Activated naive CD4-positive, alpha-beta T cell treated with anti-CD3 and anti-CD28 coated beads for 36 hours (primary cell): ENCODE measurements at regions of chr9 and their contacts with region 1.

Region 1: GRCh38 chr9:83937911-83938323 is 16.7 kb upstream of the KIF27 start:
- DNase-seq: peak; percentile 35
- H3K4me3 Mint-ChIP-seq: no peak overlapping the region
- H3K27ac Mint-ChIP-seq: no peak overlapping the region
- H3K4me1 Mint-ChIP-seq: no peaks in the 10 kb centered on the region
- H3K27me3 Mint-ChIP-seq: no peaks in the 10 kb centered on the region

Region 2: DNA sequence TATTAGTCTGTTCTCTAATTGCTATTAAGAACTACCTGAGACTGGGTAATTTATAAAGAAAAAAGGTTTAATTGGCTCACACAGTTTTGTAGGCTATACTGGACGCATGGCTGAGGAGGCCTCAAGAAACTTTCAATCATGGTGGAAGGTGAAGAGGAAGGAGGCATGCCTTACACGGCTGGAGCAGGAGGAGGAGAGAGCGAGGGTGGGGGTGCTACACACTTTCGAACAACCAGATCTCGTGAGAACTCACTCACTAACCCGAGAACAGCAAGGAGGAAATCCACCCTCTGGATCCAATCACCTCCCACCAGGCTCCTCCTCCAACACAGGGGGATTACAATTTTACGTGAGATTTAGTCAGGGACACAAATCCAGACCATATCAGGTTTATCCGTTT is 132.7 kb after region 1 on chr9:
- CTCF ChIA-PET with region 1: interaction called, 3 read pairs
- intact Hi-C with region 1: loop called (anchors 10 kb)
- DNase-seq: no peak
- H3K4me3 Mint-ChIP-seq: no peak overlapping the region
- H3K27ac Mint-ChIP-seq: no peak overlapping the region
- H3K4me1 Mint-ChIP-seq: no peaks in the 10 kb centered on the region
- H3K27me3 Mint-ChIP-seq: peaks cover under 1% of the 10 kb centered on the region

Region 3: GRCh38 chr9:84170521-84171141 is 232.7 kb after region 1 on chr9:
- CTCF ChIA-PET with region 1: interaction called, 7 read pairs
- intact Hi-C with region 1: loop called (anchors 1 kb)
- DNase-seq: no peak
- H3K4me3 Mint-ChIP-seq: no peak overlapping the region
- H3K27ac Mint-ChIP-seq: no peak overlapping the region
- H3K4me1 Mint-ChIP-seq: no peaks in the 10 kb centered on the region
- H3K27me3 Mint-ChIP-seq: peaks cover 1% of the 10 kb centered on the region